H1 (cell line): ENCODE measurements at regions of chr17 and their contacts with region 1.

Region 1: DNA sequence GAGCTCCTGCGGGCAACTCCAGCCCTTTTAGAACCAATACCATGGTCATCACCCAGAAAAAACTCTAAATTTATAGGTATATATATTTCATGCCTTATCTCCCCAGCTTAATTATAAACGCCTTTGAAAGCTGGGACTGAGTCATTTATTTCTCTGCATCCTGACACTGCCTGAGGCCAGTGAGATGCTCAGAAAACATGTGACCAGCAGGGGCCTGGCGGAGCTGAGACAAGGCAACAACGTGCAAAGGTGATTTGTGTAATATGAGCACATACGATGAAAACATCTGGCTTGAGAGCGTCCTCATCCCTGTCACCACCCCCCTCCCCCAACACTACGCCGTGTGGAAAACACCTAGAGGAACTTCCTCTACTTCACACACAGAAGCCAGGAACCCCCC is 22.7 kb downstream of the NXN start:
- DNase-seq: no peak
- H3K4me3 ChIP-seq: no peak overlapping the region
- H3K27ac ChIP-seq: no peak overlapping the region
- H3K4me1 ChIP-seq: peaks cover 2 to 9% (median 5%) of the 10 kb centered on the region in 4 experiments; a peak in 6 of 7 replicates
- H3K27me3 ChIP-seq: no peaks in the 10 kb centered on the region
- CTCF ChIP-seq: no peak
- EP300 ChIP-seq: no peak
- POLR2A ChIP-seq: no peak
- RAD21 ChIP-seq: no peak

Region 2: DNA sequence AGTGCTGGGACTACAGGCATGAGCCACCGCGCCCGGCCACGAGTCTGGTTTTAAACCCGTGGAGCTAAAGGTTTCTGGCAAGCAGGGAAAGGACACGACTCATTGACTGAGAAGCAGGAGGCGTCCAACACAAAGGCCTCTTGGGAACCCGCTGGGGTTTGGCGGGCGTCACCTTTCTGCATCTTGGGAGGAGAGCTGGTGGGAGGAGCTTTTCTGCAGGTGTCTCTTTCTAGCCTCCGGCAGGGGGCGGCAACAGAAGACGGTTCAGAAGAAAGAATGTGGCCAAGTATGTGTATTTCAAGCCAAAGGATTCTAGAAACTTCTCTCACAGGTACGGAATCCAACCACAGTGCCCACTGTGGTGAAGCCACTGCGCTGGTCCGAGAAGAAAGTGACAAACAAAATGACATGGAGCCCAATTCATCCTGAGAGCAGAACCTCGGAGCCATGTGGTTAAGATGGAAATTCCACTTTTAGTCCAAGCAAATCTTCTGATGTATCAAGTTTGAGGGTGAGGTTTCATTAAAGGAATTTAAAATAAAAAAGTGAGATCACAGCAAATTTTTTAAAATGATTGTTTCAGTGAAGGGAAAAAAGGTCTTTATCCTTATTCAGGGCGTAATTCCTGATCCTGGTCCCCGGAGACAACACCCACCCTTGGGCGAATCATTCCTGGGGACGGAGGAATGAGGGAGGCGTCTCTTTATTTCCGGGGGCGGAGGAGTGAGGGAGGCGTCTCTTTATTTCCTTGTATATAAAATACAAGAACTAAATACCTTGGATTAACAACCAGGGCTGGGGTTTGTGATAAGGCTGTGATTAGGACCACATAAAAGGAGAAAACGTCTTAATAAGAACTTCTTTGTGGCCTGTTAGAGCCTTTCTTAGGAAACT is 77.1 kb before region 1 on chr17:
- CTCF ChIA-PET with region 1: interaction called, 20 read pairs
- POLR2A ChIA-PET with region 1: no interaction called
- DNase-seq: peak; percentile 87 to 93
- H3K4me3 ChIP-seq: no peak overlapping the region
- H3K27ac ChIP-seq: no peak overlapping the region
- H3K4me1 ChIP-seq: peaks cover 2 to 38% (median 3%) of the 10 kb centered on the region in 4 experiments
- H3K27me3 ChIP-seq: no peaks in the 10 kb centered on the region
- CTCF ChIP-seq: peak; percentile 46 to 74 (median 73)
- EP300 ChIP-seq: 0 out of 3 replicates have a peak, but pooled peaks of 1 of the 2 experiments have one; percentile 32
- POLR2A ChIP-seq: no peak
- RAD21 ChIP-seq: peak; percentile 63 to 75

Region 3: DNA sequence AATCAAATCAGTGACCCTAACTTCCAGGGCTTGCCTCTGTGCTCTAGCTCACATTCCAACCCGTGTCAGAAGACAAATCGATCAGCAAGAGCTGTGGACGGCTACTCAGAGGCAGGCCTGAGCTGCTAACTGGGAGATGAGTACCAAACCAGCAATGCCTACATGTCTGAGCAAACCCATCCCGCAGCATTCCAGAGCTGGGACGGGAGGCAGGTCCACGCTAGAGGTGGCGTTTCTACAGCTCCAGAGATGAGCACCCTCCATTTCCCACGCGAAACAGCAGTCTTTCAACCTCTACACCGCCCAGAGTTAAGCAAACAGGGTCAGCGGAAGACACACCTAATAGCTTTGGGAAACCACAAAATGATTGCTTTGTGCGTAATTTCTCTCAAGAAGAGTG is 16.1 kb after region 1 on chr17:
- CTCF ChIA-PET with region 1: interaction called, 16 read pairs
- POLR2A ChIA-PET with region 1: interaction called, 10 read pairs
- DNase-seq: no peak
- H3K4me3 ChIP-seq: no peak overlapping the region
- H3K27ac ChIP-seq: no peak overlapping the region
- H3K4me1 ChIP-seq: peaks cover 10 to 39% (median 24%) of the 10 kb centered on the region in 4 experiments
- H3K27me3 ChIP-seq: no peaks in the 10 kb centered on the region
- CTCF ChIP-seq: no peak
- EP300 ChIP-seq: no peak
- POLR2A ChIP-seq: no peak
- RAD21 ChIP-seq: no peak

Region 4: DNA sequence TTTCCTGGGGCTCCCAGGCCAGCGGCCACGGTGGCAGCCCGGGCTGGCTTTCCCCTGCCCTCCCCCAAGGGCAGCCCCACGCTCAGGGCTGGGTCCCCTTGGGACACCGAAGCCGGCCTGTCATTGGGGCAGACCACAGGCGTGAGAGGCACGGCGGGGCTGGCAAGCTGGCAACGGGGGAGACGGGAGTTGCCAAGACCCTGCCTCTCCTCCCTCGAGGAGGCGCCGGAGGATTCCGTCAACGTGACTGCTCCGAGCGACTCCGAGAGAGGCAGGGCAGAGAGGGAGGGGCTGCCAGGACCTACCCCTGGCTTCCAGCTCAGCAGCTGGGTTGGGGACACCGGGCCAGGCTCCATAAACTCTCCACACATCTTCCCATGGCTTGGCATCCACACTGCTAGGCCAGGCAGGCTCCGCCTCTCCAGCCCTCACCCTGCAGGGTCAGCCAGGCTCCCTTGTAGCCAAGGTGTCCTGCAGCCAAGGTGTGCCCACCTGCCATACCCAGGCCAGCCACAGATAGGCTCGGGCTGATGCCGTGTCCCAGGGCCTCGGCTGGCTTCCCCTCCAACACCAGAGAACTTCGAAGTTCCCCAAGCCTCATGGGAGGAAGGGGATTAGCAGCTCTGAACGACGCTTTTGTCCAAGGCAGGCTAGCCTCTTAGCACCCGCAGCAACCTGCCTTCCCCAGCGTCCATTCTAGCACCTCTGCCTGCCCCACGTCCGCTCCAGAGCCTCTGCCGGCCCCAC is 65.5 kb after region 1 on chr17:
- CTCF ChIA-PET with region 1: no interaction called
- POLR2A ChIA-PET with region 1: no interaction called
- DNase-seq: no peak
- H3K4me3 ChIP-seq: no peak overlapping the region
- H3K27ac ChIP-seq: no peak overlapping the region
- H3K4me1 ChIP-seq: no peaks in the 10 kb centered on the region
- H3K27me3 ChIP-seq: no peaks in the 10 kb centered on the region
- CTCF ChIP-seq: no peak
- EP300 ChIP-seq: no peak
- POLR2A ChIP-seq: no peak
- RAD21 ChIP-seq: no peak